Mammary epithelial cell (primary cell): ENCODE measurements at regions of chr15 and their contacts with region 1.

Region 1: GRCh38 chr15:80480909-80481308 is 76.7 kb downstream of the ARNT2 start:
- DNase-seq: peak; percentile 26
- H3K4me3 ChIP-seq: no peak overlapping the region
- H3K27ac ChIP-seq: no peak overlapping the region
- H3K4me1 ChIP-seq: peaks cover 14% of the 10 kb centered on the region
- H3K27me3 ChIP-seq: no peaks in the 10 kb centered on the region
- CTCF ChIP-seq: no peak

Region 2: DNA sequence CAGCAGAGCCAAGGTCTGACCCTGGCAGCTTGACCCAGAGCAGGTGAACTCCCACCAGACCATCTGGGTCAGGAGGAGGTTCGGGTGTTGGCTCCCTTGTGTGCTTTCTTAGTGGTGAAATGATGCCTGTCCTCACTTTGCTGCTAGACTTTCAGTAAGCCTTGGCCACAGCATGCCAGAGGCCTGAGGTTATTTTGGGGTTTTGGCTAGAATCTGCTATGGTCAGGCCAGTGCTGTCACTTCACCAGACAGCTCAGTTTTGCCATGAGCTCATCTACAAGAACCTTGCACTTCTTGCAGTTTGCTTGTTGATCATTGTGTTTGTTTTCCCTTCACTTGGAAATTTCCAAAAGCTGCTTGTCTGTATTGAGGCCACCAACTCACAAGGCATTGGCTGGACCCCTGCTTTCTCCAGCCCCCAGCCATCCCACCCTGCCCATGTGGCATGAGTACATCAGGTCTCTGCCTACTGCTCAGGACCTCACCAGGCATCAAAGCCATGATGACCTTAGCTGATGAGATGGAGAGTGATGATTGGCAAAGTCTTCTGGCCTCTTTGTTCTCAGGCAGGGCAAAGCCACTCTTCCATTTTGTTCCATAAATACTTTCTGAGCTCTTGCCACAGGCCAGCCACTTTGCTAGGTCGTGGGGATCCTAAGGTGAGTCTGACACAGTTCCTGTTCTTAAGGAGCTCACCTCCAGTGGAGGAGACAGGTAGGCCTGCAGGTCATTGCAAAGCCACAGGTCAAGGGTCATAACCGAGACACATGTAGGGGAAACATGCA is 45.8 kb after region 1 on chr15:
- CTCF ChIA-PET with region 1: no interaction called
- dilution Hi-C with region 1: loop called (anchors 5 kb)
- in situ Hi-C with region 1: no loop called
- intact Hi-C with region 1: no loop called
- DNase-seq: no peak
- H3K4me3 ChIP-seq: no peak overlapping the region
- H3K27ac ChIP-seq: no peak overlapping the region
- H3K4me1 ChIP-seq: no peaks in the 10 kb centered on the region
- H3K27me3 ChIP-seq: no peaks in the 10 kb centered on the region
- CTCF ChIP-seq: no peak